Motor neuron (in vitro differentiated cells): ENCODE measurements at regions of chr6 and their contacts with region 1.

Region 1: DNA sequence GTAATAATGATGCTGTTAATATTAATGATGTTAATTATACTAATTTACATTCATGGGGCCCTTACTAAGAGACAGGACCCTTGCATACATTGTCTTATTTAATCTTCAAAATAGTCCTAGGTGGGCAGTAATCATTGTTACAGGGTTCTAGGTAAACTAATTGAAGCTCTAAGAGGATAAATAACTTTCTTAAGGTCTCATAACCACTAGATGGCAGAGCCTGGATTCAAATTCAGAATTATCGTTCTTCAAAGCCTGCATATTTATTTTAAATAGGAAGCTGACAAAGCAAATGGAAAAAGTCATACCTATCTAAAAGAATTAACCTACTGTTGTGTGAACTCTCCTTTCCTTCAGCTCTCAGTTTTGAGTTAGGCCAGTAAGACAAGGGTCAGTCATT is 23.5 kb downstream of the PTCHD4 start:
- ATAC-seq: no peak
- H3K4me3 ChIP-seq: no peak overlapping the region
- H3K27ac ChIP-seq: no peak overlapping the region
- H3K4me1 ChIP-seq: peaks cover 3 to 12% of the 10 kb centered on the region in 2 donors

Region 2: GRCh38 chr6:47267301-47267700 is 820.1 kb before region 1 on chr6:
- in situ Hi-C with region 1: no loop called
- ATAC-seq: no peak
- H3K4me3 ChIP-seq: no peak overlapping the region
- H3K27ac ChIP-seq: no peak overlapping the region
- H3K4me1 ChIP-seq: no peaks in the 10 kb centered on the region

Region 3: DNA sequence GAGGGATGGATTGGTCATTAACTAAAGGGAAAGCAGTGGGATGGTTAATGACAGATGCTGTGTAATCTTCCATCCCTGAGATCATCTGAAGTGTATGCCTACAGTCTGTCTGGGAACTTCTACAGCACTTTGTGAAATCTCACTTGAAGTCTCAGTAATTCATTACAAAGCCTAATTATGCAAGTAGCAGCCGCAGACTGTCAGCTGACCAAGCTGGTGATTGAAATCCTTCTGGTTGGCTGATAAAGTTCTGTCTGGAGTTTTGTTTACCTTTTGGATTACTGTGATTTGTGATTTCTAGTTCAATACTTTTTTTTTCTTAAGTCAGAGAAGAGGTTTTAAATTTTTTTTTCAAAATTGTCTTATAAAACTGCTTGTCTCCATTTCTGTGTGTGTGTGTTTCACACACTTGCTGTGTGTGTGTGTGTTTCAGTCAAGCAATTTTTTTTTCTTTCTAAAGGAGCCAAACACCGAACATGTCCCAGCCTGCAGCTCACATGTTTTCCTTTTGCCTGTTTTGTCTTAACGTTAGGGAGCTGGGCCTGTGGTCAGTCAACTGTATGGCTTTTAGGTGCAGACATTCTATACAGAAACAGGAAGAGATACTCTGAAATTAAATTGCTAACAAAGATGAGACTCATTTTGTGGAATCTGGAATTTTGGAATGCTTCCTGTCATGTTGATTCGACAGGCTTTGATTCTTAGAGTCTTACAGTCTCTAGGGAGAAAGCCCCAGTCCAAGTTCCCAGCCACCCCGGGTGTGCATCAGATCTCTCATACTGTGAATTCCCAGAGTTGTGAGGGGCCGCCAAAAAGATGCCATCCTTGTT is 417.5 kb before region 1 on chr6:
- in situ Hi-C with region 1: no loop called
- ATAC-seq: peak; percentile 28 to 92 (median 78)
- H3K4me3 ChIP-seq: no peak overlapping the region
- H3K27ac ChIP-seq: peak overlapping the region in 1 of 2 donors; percentile 20
- H3K4me1 ChIP-seq: peaks cover 2 to 8% of the 10 kb centered on the region in 2 donors

Region 4: DNA sequence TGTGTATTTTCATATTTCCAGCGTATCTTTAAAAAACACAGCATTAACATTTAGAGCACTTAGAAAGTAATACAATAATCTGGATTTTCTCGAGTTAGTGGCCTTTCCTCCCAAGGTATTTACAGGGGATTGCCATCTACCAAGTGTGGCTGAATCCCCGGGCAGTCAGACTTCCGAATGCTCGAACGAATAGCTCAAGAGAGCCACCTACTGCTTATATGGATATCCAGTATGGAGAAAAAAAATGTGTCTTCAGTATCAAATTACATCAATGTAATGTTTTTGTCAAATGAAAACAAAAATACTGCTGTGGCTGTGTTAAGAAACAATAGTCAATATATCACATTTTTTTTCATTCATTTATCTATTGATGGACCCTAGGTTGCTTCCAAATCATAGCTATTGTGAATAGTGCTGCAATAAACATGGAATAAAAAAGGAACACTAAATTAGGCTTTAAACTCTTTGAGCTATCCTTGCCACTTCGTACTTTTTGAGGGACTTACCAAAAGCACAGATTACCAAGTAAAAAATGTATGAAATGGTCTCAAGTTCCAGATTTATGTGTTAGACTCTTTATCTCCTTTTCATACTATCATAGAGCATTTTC is 678.0 kb after region 1 on chr6:
- in situ Hi-C with region 1: loop called in 1 of 9 experiments (anchors 25 kb)
- ATAC-seq: peak; percentile 52 to 90 (median 73)
- H3K4me3 ChIP-seq: no peak overlapping the region
- H3K27ac ChIP-seq: no peak overlapping the region
- H3K4me1 ChIP-seq: no peaks in the 10 kb centered on the region